ENCODE measurements at regions of chr1 and their contacts with region 1.

Region 1: DNA sequence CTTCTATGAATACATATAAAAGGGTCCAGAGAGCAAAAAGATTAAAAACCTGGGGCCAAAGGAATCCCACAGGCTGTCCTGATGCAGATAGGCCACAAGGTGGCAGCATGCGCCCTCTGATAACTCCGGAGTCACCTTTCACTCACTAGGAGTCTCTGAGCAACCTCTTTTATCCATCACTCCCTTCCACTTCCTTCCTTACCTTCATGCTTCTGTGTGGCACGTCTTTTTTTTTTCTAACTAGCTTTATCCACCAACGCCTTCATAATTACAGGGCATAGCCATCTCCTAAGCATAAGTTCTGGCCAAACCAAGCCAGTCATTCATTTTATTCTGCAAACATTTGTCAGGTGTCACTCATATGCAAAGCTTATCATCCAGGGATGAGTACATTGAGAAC is 3.9 kb upstream of the PGLYRP4 start:
- DNase-seq: peak; percentile 45 to 62
- H3K4me3 ChIP-seq: no peak overlapping the region
- H3K27ac ChIP-seq: no peak overlapping the region
- H3K4me1 ChIP-seq: peaks cover 0 to 4% of the 10 kb centered on the region in 2 donors
- H3K27me3 ChIP-seq: peaks cover 0 to 6% of the 10 kb centered on the region in 2 donors
- CTCF ChIP-seq: peak; percentile 60 to 85 (median 80)
- POLR2A ChIP-seq: no peak

Region 2: DNA sequence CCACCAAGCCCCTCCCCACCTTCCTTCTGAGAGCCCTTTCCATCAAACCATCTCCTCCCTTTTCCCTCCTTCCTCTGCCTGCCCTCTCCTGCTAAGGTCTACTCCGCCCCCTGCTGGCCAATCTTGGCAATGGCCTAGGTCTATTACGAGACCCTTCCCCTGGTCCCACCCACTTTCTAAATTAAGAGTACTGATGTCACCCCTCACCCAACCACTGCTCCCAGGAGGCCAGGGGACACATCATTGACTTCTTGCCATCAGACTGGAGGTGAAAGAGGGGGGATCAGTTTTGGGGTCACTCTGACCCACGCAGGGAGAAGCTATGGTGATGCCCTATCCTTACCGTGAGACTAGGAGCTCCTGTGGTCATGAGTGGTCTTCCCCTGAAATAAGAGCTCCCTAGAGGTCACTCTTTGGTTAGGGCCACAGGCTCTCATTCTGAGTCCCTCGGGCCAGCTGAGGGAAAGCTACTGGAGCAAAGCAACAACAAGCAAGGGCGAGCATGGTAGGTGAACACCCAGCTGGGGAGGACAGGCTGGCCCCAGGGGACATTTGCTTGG is 142.5 kb after region 1 on chr1:
- intact Hi-C with region 1: loop called (anchors 2 kb)
- DNase-seq: peak in 1 of 2 donors; percentile 63
- H3K4me3 ChIP-seq: no peak overlapping the region
- H3K27ac ChIP-seq: no peak overlapping the region
- H3K4me1 ChIP-seq: peaks cover 0 to 7% of the 10 kb centered on the region in 2 donors
- H3K27me3 ChIP-seq: no peaks in the 10 kb centered on the region
- CTCF ChIP-seq: peak; percentile 83 to 96 (median 93)
- POLR2A ChIP-seq: no peak